MCF 10A (cell line): ENCODE measurements at regions of chr2 and their contacts with region 1.

Region 1: DNA sequence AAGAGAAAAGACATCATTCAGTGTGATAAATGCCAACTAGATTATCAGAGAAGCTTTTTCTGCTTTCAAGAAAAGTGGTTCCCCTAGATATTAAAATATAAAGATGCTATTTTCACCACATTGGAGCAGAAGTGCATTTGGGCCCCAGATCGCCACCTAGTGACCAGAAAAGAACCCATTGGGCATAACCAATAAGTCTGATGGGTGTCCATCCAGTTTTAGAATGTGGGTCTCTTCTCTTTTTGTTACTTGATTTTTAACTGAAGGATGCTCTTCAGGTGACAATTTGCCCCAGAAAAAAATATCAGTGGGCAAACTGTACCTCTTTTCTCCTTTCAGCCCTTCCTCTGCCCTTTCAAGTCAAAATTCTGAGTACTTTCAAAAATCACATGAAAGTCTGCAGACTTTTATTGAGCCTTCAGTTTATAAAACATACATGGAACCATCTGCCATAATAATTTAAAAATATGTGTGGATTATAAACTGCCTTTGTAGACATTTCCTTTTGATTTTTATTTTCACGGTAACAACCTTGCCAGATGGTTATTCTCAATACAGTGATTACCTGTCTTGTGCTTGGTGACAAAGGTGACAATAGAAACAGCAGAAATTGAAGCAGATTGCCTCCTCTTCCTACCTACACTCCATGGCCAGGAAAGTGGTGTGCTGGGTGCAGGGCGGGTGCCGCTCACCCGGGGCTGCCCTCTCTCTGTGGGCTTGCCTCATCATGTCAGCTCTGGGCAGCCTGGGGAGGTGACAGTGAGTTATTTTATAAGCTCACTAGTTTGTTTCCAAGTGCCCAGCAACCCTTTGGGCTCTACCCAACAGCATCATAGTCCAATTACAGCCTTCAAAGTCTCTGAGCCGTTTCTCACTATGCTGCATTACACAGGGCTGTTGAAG is 124.5 kb downstream of the DCDC2C start:
- DNase-seq: peak; percentile 70
- H3K4me3 Mint-ChIP-seq: no peak overlapping the region
- H3K27ac Mint-ChIP-seq: no peak overlapping the region
- H3K4me1 Mint-ChIP-seq: peaks cover 23% of the 10 kb centered on the region
- H3K27me3 Mint-ChIP-seq: no peaks in the 10 kb centered on the region
- CTCF ChIP-seq: peak; percentile 55

Region 2: GRCh38 chr2:3282056-3282998 is 545.6 kb before region 1 on chr2:
- CTCF ChIA-PET with region 1: no interaction called
- POLR2A ChIA-PET with region 1: no interaction called
- intact Hi-C with region 1: no loop called
- DNase-seq: no peak
- H3K4me3 Mint-ChIP-seq: no peak overlapping the region
- H3K27ac Mint-ChIP-seq: no peak overlapping the region
- H3K4me1 Mint-ChIP-seq: no peaks in the 10 kb centered on the region
- H3K27me3 Mint-ChIP-seq: no peaks in the 10 kb centered on the region
- CTCF ChIP-seq: no peak

Region 3: DNA sequence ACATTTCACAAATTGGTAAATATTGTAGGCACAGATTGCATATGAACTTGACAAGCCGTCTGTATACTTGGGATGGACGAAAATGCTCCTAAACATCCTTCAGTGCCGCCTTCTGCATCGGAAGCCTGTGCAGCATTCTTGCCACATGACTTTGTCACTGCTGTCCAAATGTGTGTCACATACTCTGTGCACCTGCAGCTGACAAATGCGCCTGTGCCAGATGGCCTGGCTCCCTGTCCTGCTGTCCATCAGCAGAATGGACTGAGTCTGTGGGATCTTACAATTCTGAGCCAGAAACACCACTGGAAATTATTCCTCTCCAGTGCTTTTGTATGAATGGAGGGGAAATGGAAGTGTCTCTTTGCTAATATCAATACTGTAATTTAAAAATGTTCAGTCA is 34.7 kb before region 1 on chr2:
- CTCF ChIA-PET with region 1: no interaction called
- POLR2A ChIA-PET with region 1: no interaction called
- intact Hi-C with region 1: no loop called
- DNase-seq: no peak
- H3K4me3 Mint-ChIP-seq: no peak overlapping the region
- H3K27ac Mint-ChIP-seq: no peak overlapping the region
- H3K4me1 Mint-ChIP-seq: peaks cover 8% of the 10 kb centered on the region
- H3K27me3 Mint-ChIP-seq: no peaks in the 10 kb centered on the region
- CTCF ChIP-seq: no peak

Region 4: DNA sequence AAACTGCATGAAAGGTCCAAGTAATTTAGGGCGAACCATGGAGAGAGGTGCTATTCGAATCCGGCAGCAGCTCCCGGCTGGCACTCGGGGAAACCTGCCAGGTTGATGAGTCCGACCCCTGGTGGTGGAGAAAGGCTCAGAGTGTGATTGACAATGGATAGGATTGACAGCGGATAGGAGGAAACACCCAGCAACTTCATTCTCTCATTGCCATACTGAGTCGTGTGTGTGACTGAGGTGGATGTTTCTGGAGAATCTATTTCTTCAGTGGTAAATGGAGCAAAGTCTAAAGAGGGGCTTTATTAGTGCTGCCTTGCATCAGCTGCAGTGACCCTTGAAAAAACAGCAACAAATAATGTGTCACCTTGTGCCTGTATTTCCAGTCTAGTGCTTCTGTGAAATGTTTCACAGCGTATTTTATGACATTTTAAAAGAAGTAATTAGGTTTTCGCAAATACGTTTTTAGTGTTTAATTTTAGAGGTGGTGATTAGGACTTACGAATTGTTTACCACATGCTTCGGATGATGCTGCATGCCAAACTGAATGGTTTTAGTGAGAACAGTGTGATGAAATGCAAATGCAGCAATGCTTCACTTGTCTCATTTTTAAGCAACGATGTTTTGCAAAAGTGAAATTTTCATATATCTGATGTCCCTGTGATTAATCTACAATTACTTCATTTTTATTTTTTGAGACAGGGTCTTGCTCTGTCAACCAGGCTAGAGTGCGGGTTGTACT is 22.6 kb before region 1 on chr2:
- CTCF ChIA-PET with region 1: interaction called, 10 read pairs
- POLR2A ChIA-PET with region 1: interaction called, 11 read pairs
- intact Hi-C with region 1: no loop called
- DNase-seq: peak; percentile 73
- H3K4me3 Mint-ChIP-seq: no peak overlapping the region
- H3K27ac Mint-ChIP-seq: no peak overlapping the region
- H3K4me1 Mint-ChIP-seq: peaks cover 15% of the 10 kb centered on the region
- H3K27me3 Mint-ChIP-seq: no peaks in the 10 kb centered on the region
- CTCF ChIP-seq: peak; percentile 20